ENCODE measurements at regions of chr15 and their contacts with region 1.

Region 1: GRCh38 chr15:73704869-73705645 is 20.9 kb downstream of the CD276 start:
- DNase-seq: peak; percentile 81
- ATAC-seq: peak; percentile 75
- H3K4me3 Mint-ChIP-seq: no peak overlapping the region
- H3K27ac Mint-ChIP-seq: no peak overlapping the region
- H3K4me1 Mint-ChIP-seq: peaks cover 1% of the 10 kb centered on the region
- H3K27me3 Mint-ChIP-seq: peaks cover 25% of the 10 kb centered on the region

Region 2: GRCh38 chr15:73560501-73561117 is 144.4 kb before region 1 on chr15:
- CTCF ChIA-PET with region 1: interaction called, 45 read pairs
- DNase-seq: no peak
- ATAC-seq: peak; percentile 70
- H3K4me3 Mint-ChIP-seq: no peak overlapping the region
- H3K27ac Mint-ChIP-seq: no peak overlapping the region
- H3K4me1 Mint-ChIP-seq: peaks cover 23% of the 10 kb centered on the region
- H3K27me3 Mint-ChIP-seq: no peaks in the 10 kb centered on the region

Region 3: DNA sequence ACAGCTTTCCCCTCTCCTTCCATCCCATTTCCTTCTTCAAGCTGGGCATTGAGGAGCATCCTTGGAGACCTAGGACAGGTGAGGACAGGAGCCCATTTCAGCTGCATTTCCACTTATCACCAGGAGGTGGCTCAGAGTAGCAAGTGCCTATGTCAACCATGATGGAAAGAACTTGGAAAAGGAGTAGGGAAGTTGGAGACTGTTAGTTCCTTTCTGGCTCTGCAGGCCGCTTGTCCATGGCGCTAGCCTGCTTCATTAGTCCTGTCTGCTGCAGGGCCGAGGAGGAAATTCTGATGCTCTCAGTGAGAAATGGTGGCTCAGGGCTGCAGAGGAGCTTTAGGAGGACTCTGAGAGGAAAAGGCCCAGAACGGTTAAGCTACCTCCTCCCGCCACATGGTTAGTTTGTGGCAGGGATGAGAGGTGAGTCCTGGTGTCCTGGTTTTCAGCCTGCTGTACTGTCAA is 27.9 kb before region 1 on chr15:
- CTCF ChIA-PET with region 1: interaction called, 137 read pairs
- DNase-seq: peak; percentile 56
- ATAC-seq: peak; percentile 61
- H3K4me3 Mint-ChIP-seq: no peak overlapping the region
- H3K27ac Mint-ChIP-seq: no peak overlapping the region
- H3K4me1 Mint-ChIP-seq: peaks cover 28% of the 10 kb centered on the region
- H3K27me3 Mint-ChIP-seq: peaks cover 51% of the 10 kb centered on the region

Region 4: DNA sequence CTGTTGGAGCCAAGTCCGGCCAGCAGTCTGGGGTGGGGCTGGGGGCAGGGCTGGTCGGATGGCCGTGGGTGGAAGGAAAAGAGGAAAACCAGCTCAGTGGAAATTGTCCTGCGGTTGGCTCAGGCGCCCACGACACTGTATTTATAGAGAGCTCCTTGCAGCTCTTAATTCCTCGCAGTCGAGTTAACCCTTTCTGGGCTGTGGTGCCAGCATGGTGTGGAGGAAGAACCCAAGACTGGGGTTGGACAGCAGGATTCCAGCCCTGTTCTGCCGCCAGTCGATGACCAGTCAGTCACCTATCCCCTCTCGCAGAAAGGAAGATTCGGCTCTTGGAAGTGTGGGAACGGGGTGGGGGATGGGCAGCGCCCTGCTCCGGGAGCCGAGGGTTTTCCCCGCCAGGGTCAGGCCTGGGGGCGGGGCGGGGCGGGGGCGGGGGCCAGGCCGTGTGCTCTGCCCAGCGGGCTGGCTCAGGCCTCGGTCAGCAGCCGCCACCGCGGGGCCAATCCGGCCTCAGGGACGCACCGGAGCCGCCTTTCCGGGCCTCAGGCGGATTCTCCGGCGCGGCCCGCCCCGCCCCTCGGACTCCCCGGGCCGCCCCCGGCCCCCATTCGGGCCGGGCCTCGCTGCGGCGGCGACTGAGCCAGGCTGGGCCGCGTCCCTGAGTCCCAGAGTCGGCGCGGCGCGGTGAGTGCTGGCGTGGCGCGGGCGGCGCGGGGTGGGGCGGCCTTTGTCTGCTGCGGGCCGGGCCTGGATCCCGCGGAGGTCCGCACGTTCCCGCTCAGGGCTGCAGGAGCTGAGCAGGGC is 21.1 kb before region 1 on chr15 and contains the start of gene CD276:
- CTCF ChIA-PET with region 1: interaction called, 137 read pairs
- DNase-seq: peak; percentile 36
- ATAC-seq: peak; percentile 60
- H3K4me3 Mint-ChIP-seq: peak within 1 kb of the TSS; percentile 39
- H3K27ac Mint-ChIP-seq: no peak within 1 kb of the TSS
- H3K4me1 Mint-ChIP-seq: peaks cover 9% of the 10 kb centered on the region
- H3K27me3 Mint-ChIP-seq: peaks cover 81% of the 10 kb centered on the region
- total RNA-seq, gene CD276: 3.7 TPM in 1 of 2 experiments, not detected in the other

Region 5: GRCh38 chr15:73691396-73691795 is 13.7 kb before region 1 on chr15:
- CTCF ChIA-PET with region 1: interaction called, 18 read pairs
- DNase-seq: no peak
- ATAC-seq: no peak
- H3K4me3 Mint-ChIP-seq: no peak overlapping the region
- H3K27ac Mint-ChIP-seq: no peak overlapping the region
- H3K4me1 Mint-ChIP-seq: peaks cover 23% of the 10 kb centered on the region
- H3K27me3 Mint-ChIP-seq: peaks cover 69% of the 10 kb centered on the region

Region 6: DNA sequence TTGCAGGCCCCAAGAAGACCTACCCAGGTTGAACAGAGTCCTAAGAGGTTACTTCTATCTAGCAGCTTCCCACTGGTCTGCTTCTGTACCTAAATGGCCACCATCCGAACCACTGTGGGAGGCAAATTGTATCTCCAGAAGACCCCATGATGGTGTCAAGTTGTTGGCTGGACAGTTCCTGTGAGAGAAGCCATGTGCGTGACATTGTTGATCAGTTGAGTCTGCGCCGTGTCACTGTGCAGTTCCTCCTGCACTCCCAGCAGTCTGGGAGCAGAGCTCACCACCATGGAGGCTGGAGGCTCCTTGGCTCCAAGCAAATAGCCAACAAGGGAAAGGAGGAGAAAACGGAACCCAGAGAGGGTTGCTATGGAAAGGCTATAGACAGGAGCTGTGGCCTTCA is 1027.8 kb after region 1 on chr15:
- CTCF ChIA-PET with region 1: no interaction called
- DNase-seq: no peak
- ATAC-seq: no peak
- H3K4me3 Mint-ChIP-seq: no peak overlapping the region
- H3K27ac Mint-ChIP-seq: no peak overlapping the region
- H3K4me1 Mint-ChIP-seq: no peaks in the 10 kb centered on the region
- H3K27me3 Mint-ChIP-seq: peaks cover 39% of the 10 kb centered on the region

Measured in activated CD8-positive, alpha-beta memory T cell treated with anti-CD3 and anti-CD28 coated beads, Interleukin-2, amount 10 ng/mL, durations not matched to agents 7 days and 5 days (primary cell).